Tibial artery (tissue), 4 donors: ENCODE measurements at regions of chr20 and their contacts with region 1.

Region 1: DNA sequence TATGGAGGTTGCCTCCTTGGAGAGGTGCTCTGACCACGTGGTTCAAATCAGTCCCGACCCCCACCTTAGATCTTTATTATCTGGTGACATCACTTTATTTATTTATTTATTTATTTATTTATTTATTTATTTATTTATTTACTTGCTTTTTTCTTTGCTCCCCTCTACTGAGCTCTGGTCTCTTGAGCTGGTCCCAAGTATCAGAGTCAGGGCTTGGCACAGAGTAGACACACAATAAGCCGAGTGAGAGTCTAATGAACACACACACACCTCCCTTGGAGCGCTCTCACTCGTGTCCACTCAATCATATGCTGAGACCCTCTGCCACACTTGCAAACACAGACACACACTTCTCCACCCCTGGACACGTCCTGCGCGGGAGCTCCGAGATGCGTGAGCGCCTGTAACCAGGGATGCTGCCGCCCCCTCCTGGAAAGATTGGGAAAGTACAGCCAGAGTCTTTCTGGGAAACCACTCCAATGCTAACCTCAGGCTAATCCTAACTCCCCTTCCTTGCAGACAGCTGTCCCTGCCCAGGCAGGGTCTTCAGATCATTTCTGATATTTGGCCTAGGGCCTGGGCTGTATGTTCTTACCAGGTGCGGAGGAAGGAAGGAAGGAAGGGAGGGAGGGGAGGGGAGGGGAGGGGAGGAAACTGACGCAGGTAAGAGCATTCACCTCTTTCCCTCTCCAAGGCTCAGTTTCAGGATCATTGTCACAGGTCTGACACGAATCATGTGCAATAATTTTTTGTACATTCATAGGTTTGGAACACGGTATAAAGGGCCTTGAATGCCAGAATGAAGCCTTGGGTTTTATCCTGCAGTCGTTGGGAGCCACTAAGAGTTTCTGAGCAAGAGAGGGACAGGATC is 70.9 kb downstream of the STK35 start:
- DNase-seq: peak; percentile 75 to 80
- H3K4me3 ChIP-seq: no peak overlapping the region
- H3K27ac ChIP-seq: no peak overlapping the region
- H3K4me1 ChIP-seq: no peaks in the 10 kb centered on the region
- H3K27me3 ChIP-seq: peaks cover 0 to 35% of the 10 kb centered on the region in 2 donors
- CTCF ChIP-seq: peak; percentile 86

Region 2: DNA sequence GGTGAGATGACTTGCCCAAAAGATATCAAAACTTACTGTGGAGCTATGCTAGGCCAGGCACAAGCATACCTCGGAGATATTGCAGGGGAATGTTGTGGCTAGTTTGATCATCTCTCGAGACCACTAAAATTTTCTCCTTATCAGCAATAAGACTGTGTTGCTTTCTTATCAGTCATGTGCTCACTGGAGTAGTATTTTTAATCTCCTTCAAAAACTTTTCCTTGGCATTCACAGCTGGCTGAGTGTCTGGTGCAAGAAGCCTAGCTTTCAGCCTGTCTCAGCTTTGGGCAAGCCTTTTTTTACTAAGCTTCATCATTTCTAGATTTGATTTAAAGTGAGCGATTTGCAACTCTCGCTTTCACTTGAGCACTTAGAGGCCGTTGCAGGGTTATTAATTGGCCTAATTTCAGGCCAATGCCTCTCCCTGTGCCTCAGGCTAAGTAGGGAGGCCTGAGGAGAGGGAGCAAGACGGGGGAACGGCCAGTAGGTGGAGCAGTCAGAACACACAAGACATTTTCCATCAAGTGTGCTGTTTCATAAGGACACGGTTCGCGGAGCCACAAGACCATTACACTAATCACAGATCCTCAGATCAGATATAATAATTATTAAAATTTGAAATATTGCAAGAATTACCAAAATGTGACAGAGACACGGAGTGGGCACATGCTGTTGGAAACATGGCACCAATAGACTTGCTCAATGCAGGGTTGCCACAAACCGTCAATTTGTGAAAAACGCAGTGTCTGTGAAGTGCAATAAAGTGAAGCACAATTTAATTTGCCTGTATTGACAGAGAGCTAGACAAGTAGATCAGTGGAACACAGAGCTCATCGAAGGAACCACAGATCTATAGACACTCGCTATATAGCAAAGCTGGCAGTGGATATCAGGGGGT is 408.2 kb before region 1 on chr20:
- intact Hi-C with region 1: loop called (anchors 5 kb)
- DNase-seq: peak; percentile 79 to 81
- H3K4me3 ChIP-seq: no peak overlapping the region
- H3K27ac ChIP-seq: no peak overlapping the region
- H3K4me1 ChIP-seq: peaks cover 0 to 7% (median 4%) of the 10 kb centered on the region in 4 donors
- H3K27me3 ChIP-seq: peaks cover 0 to 3% of the 10 kb centered on the region in 2 donors
- CTCF ChIP-seq: peak; percentile 64 to 67

Region 3: DNA sequence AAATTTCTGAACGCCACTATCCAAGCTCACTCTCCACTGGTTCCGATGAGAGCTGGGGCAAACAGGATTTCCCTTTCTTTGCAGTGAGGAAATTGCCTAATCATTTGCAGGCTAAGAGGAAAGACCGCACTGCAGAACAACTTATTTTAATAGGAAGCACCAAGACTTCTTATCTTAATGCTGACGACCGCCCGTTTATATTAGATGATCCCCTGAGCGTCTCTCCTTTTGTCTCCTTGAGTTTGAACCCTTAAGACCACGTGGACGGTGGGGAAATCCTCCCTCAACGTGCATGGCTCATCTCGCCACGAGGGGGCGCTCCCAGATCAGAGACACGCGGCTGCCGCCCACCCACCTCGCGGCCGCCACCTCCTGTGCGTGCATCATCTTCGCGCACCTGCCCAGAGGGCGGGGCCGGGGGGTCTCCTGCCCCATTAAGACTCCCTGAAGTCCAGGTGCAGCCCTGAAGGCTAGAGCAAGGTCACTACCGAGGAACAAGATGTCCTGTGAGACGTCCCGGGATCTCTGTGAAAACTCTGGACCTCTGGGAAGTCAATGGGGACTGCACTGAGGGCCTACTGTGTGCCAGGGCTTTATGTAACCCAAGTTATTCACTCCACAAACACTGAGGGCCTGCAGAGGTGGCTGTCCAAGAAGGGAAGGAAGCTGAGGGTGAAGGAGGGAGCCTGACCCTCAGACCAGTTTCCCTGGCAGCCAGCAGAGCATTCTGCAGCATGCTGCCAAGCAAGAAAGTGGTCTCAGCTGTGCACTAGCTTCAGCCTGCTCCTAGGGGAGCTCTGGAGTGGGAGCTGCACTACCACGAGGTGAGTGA is 206.8 kb before region 1 on chr20:
- intact Hi-C with region 1: loop called (anchors 5 kb)
- DNase-seq: peak; percentile 71 to 82
- H3K4me3 ChIP-seq: no peak overlapping the region
- H3K27ac ChIP-seq: no peak overlapping the region
- H3K4me1 ChIP-seq: peaks cover 0 to 11% (median 3%) of the 10 kb centered on the region in 4 donors
- H3K27me3 ChIP-seq: peaks cover 0 to 40% of the 10 kb centered on the region in 2 donors
- CTCF ChIP-seq: peak; percentile 84 to 89